CD8-positive, alpha-beta memory T cell (primary cell): ENCODE measurements at regions of chr1 and their contacts with region 1.

Region 1: DNA sequence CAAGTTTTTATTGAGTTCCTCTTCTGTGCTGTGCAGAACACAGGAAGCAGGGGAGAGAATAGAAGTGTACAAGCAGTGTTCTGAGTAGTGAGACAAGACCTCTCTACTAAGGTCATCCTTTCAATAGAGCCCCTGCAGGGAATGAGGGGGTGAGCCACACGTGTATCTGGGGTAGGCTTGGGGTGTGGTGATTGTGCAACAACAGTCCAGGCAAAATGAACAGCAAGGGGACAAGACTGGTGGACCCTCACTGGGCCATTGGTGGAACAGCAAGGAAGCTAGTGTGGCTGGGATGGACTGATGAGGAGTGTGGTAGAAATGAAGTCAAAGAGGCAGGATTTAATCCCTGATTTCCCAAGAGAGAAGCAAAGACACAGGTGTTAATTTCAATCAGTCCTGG is 8.2 kb upstream of the BMP8A start:
- DNase-seq: no peak
- H3K4me3 ChIP-seq: no peak overlapping the region
- H3K4me3 Mint-ChIP-seq: no peak overlapping the region
- H3K27ac ChIP-seq: no peak overlapping the region
- H3K27ac Mint-ChIP-seq: peak overlapping the region in 5 of 8 donors; percentile 3 to 74 (median 13)
- H3K4me1 ChIP-seq: no peaks in the 10 kb centered on the region
- H3K4me1 Mint-ChIP-seq: peaks cover 0 to 1% (median 0%) of the 10 kb centered on the region in 3 donors
- H3K27me3 ChIP-seq: no peaks in the 10 kb centered on the region
- H3K27me3 Mint-ChIP-seq: peaks cover 0 to 3% of the 10 kb centered on the region in 2 donors

Region 2: DNA sequence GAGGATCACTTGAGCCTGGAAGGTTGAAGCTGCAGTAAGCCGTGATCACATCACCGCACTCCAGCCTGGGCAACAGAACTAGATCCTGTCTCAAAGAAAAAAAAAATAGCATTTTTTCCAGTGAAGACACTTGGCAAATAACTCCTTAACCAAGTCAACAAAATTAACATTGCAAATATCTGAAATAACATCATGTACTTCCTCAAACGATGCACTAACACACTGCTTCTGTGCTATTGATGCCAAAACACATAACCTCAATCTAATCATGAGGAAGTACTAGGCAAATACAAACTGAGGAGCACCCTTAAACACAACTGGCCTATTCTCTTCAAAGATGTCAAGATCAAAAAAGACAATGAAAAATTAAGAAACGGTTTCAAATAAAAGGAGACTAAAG is 61.1 kb after region 1 on chr1:
- CTCF ChIA-PET with region 1: no interaction called
- POLR2A ChIA-PET with region 1: interaction called, 11 read pairs
- DNase-seq: no peak
- H3K4me3 ChIP-seq: no peak overlapping the region
- H3K4me3 Mint-ChIP-seq: no peak overlapping the region
- H3K27ac ChIP-seq: no peak overlapping the region
- H3K27ac Mint-ChIP-seq: peak overlapping the region in 1 of 8 donors; percentile 22
- H3K4me1 ChIP-seq: no peaks in the 10 kb centered on the region
- H3K4me1 Mint-ChIP-seq: peaks cover 0 to 1% (median 0%) of the 10 kb centered on the region in 3 donors
- H3K27me3 ChIP-seq: no peaks in the 10 kb centered on the region
- H3K27me3 Mint-ChIP-seq: no peaks in the 10 kb centered on the region

Region 3: GRCh38 chr1:39691262-39692151 is 208.2 kb after region 1 on chr1 and contains the start of gene HPCAL4:
- CTCF ChIA-PET with region 1: no interaction called
- POLR2A ChIA-PET with region 1: no interaction called
- DNase-seq: peak; percentile 81 to 92 (median 87)
- H3K4me3 ChIP-seq: peak within 1 kb of the TSS; percentile 78
- H3K4me3 Mint-ChIP-seq: peak within 1 kb of the TSS; percentile 75 to 89 (median 80)
- H3K27ac ChIP-seq: peak within 1 kb of the TSS; percentile 78
- H3K27ac Mint-ChIP-seq: peak within 1 kb of the TSS; percentile 52 to 87 (median 72)
- H3K4me1 ChIP-seq: peaks cover 18% of the 10 kb centered on the region
- H3K4me1 Mint-ChIP-seq: peaks cover 14 to 51% (median 23%) of the 10 kb centered on the region in 3 donors
- H3K27me3 ChIP-seq: peaks cover 17% of the 10 kb centered on the region
- H3K27me3 Mint-ChIP-seq: peaks cover 5 to 33% of the 10 kb centered on the region in 2 donors
- total RNA-seq, gene HPCAL4: 1.9 to 2.0 TPM

Region 4: GRCh38 chr1:40232444-40232843 is 749.2 kb after region 1 on chr1:
- CTCF ChIA-PET with region 1: no interaction called
- POLR2A ChIA-PET with region 1: no interaction called
- DNase-seq: peak in 4 of 5 donors; percentile 9 to 62 (median 26)
- H3K4me3 ChIP-seq: no peak overlapping the region
- H3K4me3 Mint-ChIP-seq: no peak overlapping the region
- H3K27ac ChIP-seq: no peak overlapping the region
- H3K27ac Mint-ChIP-seq: peak overlapping the region in 4 of 8 donors; percentile 35 to 77 (median 58)
- H3K4me1 ChIP-seq: peaks cover 5% of the 10 kb centered on the region
- H3K4me1 Mint-ChIP-seq: peaks cover 9 to 25% (median 25%) of the 10 kb centered on the region in 3 donors
- H3K27me3 ChIP-seq: no peaks in the 10 kb centered on the region
- H3K27me3 Mint-ChIP-seq: no peaks in the 10 kb centered on the region